ENCODE measurements at regions of chr3 and their contacts with region 1.

Region 1: GRCh38 chr3:13025778-13026518 is 47.3 kb downstream of the IQSEC1 start:
- DNase-seq: no peak
- ATAC-seq: no peak
- H3K4me3 ChIP-seq: no peak overlapping the region
- H3K27ac ChIP-seq: no peak overlapping the region
- H3K4me1 ChIP-seq: peaks cover 15% of the 10 kb centered on the region
- H3K27me3 ChIP-seq: peaks cover 8% of the 10 kb centered on the region
- CTCF ChIP-seq: no peak
- POLR2A ChIP-seq: no peak
- RAD21 ChIP-seq: no peak

Region 2: GRCh38 chr3:12853191-12853741 is 172.7 kb before region 1 on chr3:
- CTCF ChIA-PET with region 1: interaction called, 12 read pairs
- POLR2A ChIA-PET with region 1: no interaction called
- dilution Hi-C with region 1: no loop called
- in situ Hi-C with region 1: no loop called
- intact Hi-C with region 1: no loop called
- DNase-seq: peak; percentile 85
- ATAC-seq: peak; percentile 87
- H3K4me3 ChIP-seq: no peak overlapping the region
- H3K27ac ChIP-seq: no peak overlapping the region
- H3K4me1 ChIP-seq: peaks cover 4% of the 10 kb centered on the region; the same call in 1 of the 2 replicates
- H3K27me3 ChIP-seq: peaks cover 33% of the 10 kb centered on the region
- CTCF ChIP-seq: no peak
- POLR2A ChIP-seq: no peak
- RAD21 ChIP-seq: no peak

Region 3: GRCh38 chr3:12884186-12884680 is 141.7 kb before region 1 on chr3:
- CTCF ChIA-PET with region 1: no interaction called
- POLR2A ChIA-PET with region 1: no interaction called
- dilution Hi-C with region 1: no loop called
- in situ Hi-C with region 1: no loop called
- intact Hi-C with region 1: no loop called
- DNase-seq: peak; percentile 15
- ATAC-seq: peak; percentile 74
- H3K4me3 ChIP-seq: no peak overlapping the region
- H3K27ac ChIP-seq: no peak overlapping the region
- H3K4me1 ChIP-seq: no peaks in the 10 kb centered on the region; the same call in 1 of the 2 replicates
- H3K27me3 ChIP-seq: peaks cover 35% of the 10 kb centered on the region
- CTCF ChIP-seq: no peak
- POLR2A ChIP-seq: no peak
- RAD21 ChIP-seq: no peak

Measured in IMR-90 (cell line).